ENCODE measurements at regions of chr17 and their contacts with region 1.

Region 1: GRCh38 chr17:34081269-34081668 is 173.8 kb upstream of the CCL2 start:
- DNase-seq: no peak
- H3K4me3 ChIP-seq: no peak overlapping the region
- H3K27me3 ChIP-seq: no peaks in the 10 kb centered on the region
- CTCF ChIP-seq: peak; percentile 49

Region 2: DNA sequence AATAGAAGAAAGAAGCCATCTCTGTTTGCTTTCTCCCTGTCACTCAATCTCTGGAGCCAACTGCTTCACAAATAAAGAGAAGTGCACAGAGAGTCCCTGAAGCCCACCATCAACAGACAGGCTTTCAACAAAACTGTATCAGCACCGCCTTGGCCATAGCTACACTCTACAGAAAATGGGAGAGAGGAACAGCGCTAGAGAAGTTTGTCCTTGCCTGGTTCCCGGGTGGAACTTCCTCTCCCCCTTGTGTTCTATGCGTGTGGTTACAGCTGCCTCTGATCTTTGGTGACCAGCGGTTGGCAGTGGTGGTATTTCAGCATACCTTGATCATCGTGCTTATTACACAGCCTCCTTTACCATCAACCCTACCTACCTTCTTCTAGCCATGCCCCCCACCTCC is 82.4 kb after region 1 on chr17:
- CTCF ChIA-PET with region 1: interaction called, 37 read pairs
- POLR2A ChIA-PET with region 1: no interaction called
- DNase-seq: no peak
- H3K4me3 ChIP-seq: no peak overlapping the region
- H3K27me3 ChIP-seq: peaks cover 14% of the 10 kb centered on the region
- CTCF ChIP-seq: peak; percentile 51